Left cardiac atrium (tissue), 4 donors: ENCODE measurements at regions of chr11 and their contacts with region 1.

Region 1: DNA sequence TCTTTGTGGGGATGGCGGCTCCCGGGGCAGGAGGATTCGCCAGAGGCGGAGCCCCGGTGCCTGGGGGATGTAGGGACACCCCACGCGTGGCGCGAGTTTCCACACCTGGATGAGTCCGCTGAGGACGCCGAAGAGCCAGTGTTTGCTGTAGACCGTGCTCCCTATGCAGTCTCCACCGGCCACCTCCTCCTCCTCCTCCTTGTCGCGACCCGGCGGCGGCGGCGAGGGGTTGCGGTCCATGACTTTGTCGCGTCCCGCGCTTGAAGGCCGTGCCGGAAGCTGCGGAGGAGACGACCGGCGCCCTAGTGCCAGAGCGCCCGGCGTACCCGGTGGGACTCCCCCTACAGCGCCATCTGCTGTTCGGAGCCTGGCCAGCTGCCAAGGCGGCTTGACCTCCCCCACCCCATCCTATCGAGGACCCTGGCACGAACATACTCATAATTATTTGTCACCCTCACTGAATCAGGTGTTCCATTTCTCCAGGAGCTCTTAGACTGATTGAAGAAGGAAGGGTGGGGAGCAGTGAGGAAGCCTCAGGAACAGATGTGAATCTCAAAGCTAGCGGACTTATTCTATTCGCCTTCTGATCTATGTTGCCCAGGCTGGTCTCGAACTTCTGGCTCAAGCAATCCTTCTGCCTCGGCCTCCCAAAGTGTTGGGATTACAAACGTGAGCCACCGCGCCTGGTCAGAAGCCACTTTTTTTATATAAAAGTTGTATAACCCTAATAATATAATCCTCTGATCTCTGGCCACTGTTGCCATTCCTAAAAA is at the start of gene SAAL1:
- DNase-seq: peak; percentile 90
- ATAC-seq: peak; percentile 98 to 99
- total RNA-seq, gene SAAL1: 6.6 to 8.8 TPM

Region 2: DNA sequence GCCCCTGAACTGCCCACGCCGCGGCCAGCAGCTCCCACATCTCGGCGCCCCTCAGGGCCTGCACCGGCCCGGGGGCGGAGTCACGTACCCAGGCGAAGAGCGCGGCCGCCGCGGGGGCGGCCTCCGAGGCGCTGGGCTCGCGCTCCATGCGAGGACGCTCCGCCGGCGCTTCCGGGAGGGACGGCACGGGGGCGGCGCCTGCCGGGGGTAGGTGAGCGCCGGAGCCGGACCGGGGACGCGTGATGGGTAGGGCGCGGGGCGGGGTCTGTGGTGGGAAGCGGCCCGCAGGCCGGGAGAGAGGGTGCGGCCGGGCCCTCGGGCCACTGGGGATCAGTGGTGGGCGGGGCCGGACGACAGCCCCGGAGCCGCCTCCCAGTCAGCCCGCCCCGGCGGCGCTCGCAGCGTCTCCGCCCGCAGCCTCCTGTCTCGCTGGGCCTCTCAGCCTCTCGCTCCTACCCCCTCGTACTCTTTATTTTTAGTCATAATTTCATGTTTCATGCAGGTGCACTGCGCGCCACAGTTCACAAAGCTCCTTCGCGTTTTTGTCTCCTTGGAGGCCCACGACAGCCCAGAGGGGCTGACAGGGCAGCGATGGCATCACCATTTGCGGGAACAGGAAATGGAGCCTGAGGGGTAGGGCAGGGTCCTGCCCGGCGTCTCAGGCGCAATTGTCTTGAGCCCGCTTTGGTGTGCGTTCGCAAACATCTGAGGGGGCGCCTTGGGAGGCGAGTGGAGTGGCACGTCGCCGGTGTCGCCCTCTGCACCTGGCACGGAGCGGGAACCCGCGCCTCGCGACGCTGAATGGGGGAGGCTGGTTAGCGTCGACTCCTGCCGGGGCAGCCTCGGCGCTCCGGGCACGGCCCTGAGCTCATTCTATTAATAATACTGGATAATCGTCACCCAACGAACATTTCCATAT is 92.9 kb before region 1 on chr11 and contains the start of gene SERGEF:
- intact Hi-C with region 1: loop called in 1 of 2 experiments (anchors 5 kb)
- DNase-seq: peak; percentile 95
- ATAC-seq: peak; percentile 98 to 99
- total RNA-seq, gene SERGEF: 21.1 to 28.2 TPM

Region 3: GRCh38 chr11:18056561-18057181 is 49.3 kb before region 1 on chr11:
- intact Hi-C with region 1: no loop called
- DNase-seq: no peak
- ATAC-seq: no peak